A673 (cell line): ENCODE measurements at regions of chr14 and their contacts with region 1.

Region 1: DNA sequence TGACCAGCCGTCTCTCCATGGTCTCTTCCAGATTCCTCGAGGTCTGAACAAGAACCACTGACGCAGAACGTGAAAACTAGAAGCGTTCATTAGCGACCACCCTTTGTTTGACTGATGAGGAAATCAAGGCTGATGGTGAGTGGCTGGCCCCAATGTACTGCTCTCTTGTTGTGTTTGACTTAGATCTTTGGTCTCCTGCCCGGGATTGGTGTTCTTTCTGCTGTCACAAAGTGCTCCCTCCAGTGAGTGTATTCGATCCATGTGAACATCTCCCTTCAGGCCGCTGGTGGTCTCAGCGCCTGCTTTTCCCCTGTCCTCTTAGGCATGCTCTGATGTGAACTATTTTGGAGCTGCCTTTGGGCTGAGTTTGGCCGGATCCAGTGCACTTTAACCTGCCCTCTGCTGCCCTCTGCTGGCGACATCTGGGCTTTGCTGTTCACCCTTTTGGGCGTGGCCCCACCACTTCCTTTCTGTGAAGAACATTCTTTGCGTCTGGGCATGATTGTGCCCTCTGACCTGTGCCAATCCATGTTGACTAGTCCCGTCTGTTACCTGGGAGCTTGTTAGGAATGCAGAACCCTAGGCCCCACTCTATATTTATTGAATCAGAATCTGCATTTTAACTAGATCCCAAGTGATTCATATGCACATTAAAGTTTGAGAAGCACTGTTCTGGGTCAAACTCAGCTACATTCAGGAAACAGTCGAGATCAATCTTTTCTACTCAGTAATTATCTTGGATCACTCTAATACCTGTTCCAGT is 279.2 kb downstream of the TTC6 start:
- DNase-seq: peak; percentile 77
- H3K4me3 ChIP-seq: no peak overlapping the region
- H3K27ac ChIP-seq: no peak overlapping the region
- H3K4me1 ChIP-seq: no peaks in the 10 kb centered on the region
- H3K27me3 ChIP-seq: no peaks in the 10 kb centered on the region
- CTCF ChIP-seq: peak; percentile 89

Region 2: GRCh38 chr14:37230551-37231194 is 643.9 kb before region 1 on chr14:
- CTCF ChIA-PET with region 1: no interaction called
- POLR2A ChIA-PET with region 1: no interaction called
- intact Hi-C with region 1: loop called (anchors 5 kb)
- DNase-seq: peak; percentile 80
- H3K4me3 ChIP-seq: no peak overlapping the region
- H3K27ac ChIP-seq: no peak overlapping the region
- H3K4me1 ChIP-seq: no peaks in the 10 kb centered on the region
- H3K27me3 ChIP-seq: no peaks in the 10 kb centered on the region
- CTCF ChIP-seq: peak; percentile 89

Region 3: GRCh38 chr14:37246427-37246914 is 628.1 kb before region 1 on chr14:
- CTCF ChIA-PET with region 1: no interaction called
- POLR2A ChIA-PET with region 1: no interaction called
- intact Hi-C with region 1: loop called (anchors 2 kb)
- DNase-seq: peak; percentile 61
- H3K4me3 ChIP-seq: no peak overlapping the region
- H3K27ac ChIP-seq: no peak overlapping the region
- H3K4me1 ChIP-seq: no peaks in the 10 kb centered on the region
- H3K27me3 ChIP-seq: no peaks in the 10 kb centered on the region
- CTCF ChIP-seq: peak; percentile 79

Region 4: DNA sequence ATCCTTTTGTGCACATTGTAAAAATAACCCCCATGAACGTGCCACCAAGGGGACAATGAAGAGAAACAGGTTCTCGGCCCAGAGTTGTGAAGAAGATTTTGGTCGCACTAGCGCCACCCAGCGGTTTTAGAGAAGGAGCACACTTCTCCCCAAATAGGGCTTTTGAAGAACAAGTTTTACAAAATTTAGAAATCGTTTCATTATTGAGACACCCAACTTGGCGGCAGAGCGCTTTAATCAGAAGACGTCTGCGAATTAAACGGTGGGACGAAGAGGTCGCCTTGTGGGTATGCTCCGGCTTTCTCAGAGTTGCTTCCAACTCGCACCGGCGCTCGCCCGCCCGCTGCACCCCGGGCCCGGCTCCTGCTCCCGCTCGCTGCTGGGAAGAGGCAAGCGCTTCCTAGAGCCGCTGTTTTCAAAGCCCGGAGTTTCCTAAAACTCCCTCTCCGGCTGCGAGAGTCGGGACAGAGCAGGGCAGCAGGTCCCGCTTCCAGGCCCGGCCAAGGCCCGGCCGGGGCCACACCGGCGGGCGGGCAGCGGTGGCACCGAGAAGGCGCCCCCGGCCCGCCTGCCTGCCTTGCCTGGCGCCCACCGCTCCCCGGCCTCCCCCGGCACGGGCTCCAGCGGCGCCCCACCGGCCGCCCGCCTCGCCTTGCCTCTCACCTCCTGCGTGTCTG is 280.2 kb before region 1 on chr14:
- CTCF ChIA-PET with region 1: no interaction called
- POLR2A ChIA-PET with region 1: no interaction called
- intact Hi-C with region 1: loop called (anchors 5 kb)
- DNase-seq: peak; percentile 91
- H3K4me3 ChIP-seq: peak overlapping the region; percentile 68
- H3K27ac ChIP-seq: peak overlapping the region; percentile 65
- H3K4me1 ChIP-seq: peaks cover 12% of the 10 kb centered on the region
- H3K27me3 ChIP-seq: peaks cover 72% of the 10 kb centered on the region
- CTCF ChIP-seq: peak; percentile 91

Region 5: DNA sequence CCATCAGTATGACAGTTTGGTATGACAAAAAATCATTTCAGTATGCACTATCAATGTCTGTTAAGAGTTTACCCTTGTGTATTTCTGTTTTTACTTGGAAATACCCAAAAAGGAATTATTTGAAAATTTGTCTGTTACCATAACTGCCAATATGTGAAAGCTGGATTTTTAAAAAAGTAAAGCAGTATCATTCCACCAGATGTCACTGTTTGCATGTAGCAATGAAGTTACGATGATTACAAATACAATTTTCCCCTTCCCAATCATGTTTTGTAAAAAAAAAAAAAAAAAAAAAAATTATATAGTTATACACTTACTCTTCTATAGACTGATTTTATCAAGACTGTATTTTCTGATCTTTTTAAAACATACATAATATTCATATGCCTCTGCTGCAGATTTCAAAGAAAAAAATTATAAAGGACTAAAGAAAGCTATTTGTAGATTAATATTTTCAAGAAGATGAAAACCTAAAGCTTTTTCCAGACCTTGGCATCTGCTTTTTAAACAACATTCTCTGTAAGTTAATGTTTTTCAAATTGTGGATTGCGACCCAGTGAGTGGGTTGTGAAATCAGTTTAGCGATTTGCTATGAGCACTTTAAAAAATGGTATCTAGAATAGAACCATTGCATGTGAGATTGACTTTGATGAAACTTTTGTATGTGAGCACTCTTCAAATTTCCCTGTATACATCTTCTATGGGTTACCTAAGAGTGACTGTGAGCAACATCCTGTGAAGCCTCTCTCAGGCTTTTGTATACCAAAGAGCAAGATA is 165.0 kb before region 1 on chr14:
- CTCF ChIA-PET with region 1: interaction called, 13 read pairs
- POLR2A ChIA-PET with region 1: no interaction called
- intact Hi-C with region 1: loop called (anchors 2 kb)
- DNase-seq: peak; percentile 12
- H3K4me3 ChIP-seq: no peak overlapping the region
- H3K27ac ChIP-seq: no peak overlapping the region
- H3K4me1 ChIP-seq: no peaks in the 10 kb centered on the region
- H3K27me3 ChIP-seq: no peaks in the 10 kb centered on the region
- CTCF ChIP-seq: peak; percentile 57

Region 6: GRCh38 chr14:38290601-38291190 is 416.1 kb after region 1 on chr14:
- CTCF ChIA-PET with region 1: no interaction called
- POLR2A ChIA-PET with region 1: no interaction called
- intact Hi-C with region 1: no loop called
- DNase-seq: peak; percentile 46
- H3K4me3 ChIP-seq: no peak overlapping the region
- H3K27ac ChIP-seq: no peak overlapping the region
- H3K4me1 ChIP-seq: peaks cover 6% of the 10 kb centered on the region
- H3K27me3 ChIP-seq: no peaks in the 10 kb centered on the region
- CTCF ChIP-seq: no peak